ENCODE measurements at regions of chr4 and their contacts with region 1.

Region 1: DNA sequence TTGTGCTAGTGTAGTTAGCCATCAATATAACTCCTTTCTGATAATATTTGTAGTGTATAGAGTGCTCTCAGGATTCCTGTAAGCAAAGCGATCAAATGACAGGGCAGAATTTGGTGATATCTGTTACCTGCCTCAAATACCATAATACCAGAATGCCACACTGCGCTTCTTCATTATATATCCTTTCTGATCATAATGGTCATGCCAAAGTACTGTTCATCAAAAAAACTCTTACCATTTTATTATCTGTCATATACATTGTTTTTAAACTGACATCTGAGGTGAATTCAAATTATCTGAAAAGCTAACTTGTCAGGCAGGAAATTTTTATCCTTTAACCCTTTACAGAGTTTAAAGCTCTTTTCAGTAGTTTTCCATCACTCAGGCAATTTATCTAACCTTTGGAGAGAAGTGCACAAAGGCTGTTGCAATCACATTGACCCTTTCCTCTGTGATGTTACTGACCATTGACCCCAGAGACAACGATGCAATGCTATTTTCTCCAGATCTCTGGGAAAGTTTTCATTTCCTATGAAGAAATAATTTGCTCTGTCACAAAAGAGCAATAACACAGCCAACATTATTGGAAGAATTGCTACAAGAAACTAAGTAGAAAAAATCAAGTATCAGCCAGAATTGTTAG is 37.4 kb downstream of the UGT2B4 start:
- DNase-seq: peak; percentile 59
- ATAC-seq: peak; percentile 77
- H3K4me3 ChIP-seq: no peak overlapping the region
- H3K27ac ChIP-seq: peak overlapping the region; percentile 41
- H3K4me1 ChIP-seq: peaks cover 26% of the 10 kb centered on the region
- H3K27me3 ChIP-seq: no peaks in the 10 kb centered on the region
- CTCF ChIP-seq: no peak
- EP300 ChIP-seq: peak in 1 of 2 experiments; percentile 93; a peak in 2 of 4 replicates
- POLR2A ChIP-seq: no peak
- RAD21 ChIP-seq: no peak

Region 2: GRCh38 chr4:69497076-69497475 is 38.8 kb after region 1 on chr4:
- CTCF ChIA-PET with region 1: no interaction called
- POLR2A ChIA-PET with region 1: no interaction called
- in situ Hi-C with region 1: no loop called
- intact Hi-C with region 1: loop called (anchors 2 kb)
- DNase-seq: no peak
- ATAC-seq: no peak
- H3K4me3 ChIP-seq: no peak overlapping the region
- H3K27ac ChIP-seq: no peak overlapping the region
- H3K4me1 ChIP-seq: peaks cover 39% of the 10 kb centered on the region
- H3K27me3 ChIP-seq: no peaks in the 10 kb centered on the region; a peak in 1 of 5 replicates
- CTCF ChIP-seq: no peak
- EP300 ChIP-seq: no peak
- POLR2A ChIP-seq: no peak
- RAD21 ChIP-seq: no peak

Region 3: DNA sequence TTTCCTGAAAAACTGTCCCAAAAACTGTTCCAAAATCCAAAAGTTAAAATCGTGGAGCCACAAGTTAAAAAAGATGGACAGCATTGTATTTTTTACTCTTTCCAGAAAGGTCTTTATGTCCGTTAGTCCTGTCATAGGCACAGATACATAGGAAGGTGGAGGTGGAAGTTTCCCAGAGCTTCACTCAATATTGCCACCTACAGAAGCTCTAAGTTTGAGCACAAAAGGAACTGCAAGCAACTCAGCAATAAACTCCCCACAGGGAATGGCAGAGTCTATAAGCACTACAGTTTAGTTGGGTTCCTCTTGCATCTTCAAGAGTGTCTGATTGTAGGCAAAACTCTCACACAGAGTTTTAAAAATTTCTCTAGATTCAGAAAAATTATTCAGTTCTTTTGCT is 59.4 kb after region 1 on chr4:
- CTCF ChIA-PET with region 1: no interaction called
- POLR2A ChIA-PET with region 1: no interaction called
- in situ Hi-C with region 1: no loop called
- intact Hi-C with region 1: no loop called
- DNase-seq: peak; percentile 6
- ATAC-seq: peak; percentile 92
- H3K4me3 ChIP-seq: no peak overlapping the region
- H3K27ac ChIP-seq: peak overlapping the region; percentile 3
- H3K4me1 ChIP-seq: peaks cover 8% of the 10 kb centered on the region
- H3K27me3 ChIP-seq: no peaks in the 10 kb centered on the region
- CTCF ChIP-seq: peak; percentile 46
- EP300 ChIP-seq: no peak
- POLR2A ChIP-seq: no peak
- RAD21 ChIP-seq: no peak

Region 4: DNA sequence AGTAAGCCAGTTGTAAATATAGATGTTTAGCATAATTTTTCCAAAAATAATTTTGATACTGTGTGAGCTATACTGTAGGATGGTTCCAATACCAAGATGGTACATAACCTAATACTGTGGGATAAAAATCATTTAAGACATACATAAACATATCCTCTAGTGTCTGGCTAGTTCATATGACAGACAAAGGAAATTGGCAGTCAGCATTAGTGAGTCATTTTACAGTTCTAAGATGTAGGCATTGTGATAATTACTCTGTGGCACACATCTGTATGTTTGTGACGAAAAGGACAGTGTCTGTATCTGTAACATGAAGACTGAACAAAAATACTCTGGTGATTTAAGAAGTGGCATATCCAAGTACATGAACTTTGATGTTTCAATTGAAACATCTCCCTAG is 131.6 kb after region 1 on chr4:
- CTCF ChIA-PET with region 1: no interaction called
- POLR2A ChIA-PET with region 1: no interaction called
- in situ Hi-C with region 1: no loop called
- intact Hi-C with region 1: no loop called
- DNase-seq: no peak
- ATAC-seq: no peak
- H3K4me3 ChIP-seq: no peak overlapping the region
- H3K27ac ChIP-seq: no peak overlapping the region
- H3K4me1 ChIP-seq: peaks cover 16% of the 10 kb centered on the region
- H3K27me3 ChIP-seq: no peaks in the 10 kb centered on the region
- CTCF ChIP-seq: no peak
- EP300 ChIP-seq: no peak
- POLR2A ChIP-seq: no peak
- RAD21 ChIP-seq: no peak